Aorta (tissue), 5 donors: ENCODE measurements at regions of chr13 and their contacts with region 1.

Region 1: DNA sequence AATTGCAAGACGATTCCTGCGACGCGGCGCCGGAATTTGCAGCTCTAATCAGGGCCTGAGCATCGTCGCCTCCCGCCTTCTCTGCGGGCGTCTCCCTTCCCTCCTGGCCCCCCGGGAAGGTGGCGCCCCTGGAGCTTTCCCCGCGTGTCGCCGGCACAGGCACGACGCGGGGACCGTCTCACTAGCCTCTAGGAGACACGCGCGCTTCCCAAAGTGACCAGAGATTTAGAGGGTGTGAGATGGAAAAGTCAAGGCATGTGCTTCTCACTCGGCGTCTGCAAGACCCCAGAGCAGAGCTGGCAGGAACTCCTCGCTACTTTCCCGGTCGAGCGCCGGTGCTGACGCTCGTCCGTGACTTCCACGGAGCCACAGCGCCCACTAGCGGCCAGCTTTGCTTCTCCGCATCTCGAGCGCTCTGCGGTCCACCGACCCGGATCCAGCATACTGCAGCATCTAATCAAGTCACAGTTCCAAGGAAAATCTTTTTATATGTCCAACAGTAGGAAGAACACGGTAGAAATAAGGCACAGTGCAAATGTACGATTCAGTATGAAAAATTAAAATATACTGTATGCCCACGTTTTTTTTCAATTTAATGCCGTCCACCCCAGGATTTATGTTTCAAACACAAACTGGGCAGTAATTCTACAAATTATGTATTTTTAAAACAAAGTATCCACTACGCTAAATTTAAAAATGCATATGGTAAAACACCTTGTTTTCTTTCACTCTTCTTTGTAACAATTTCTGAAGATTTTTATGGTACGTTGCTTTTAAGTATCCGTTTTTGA is 977 bp upstream of the EFNB2 start:
- DNase-seq: peak; percentile 92 to 99
- ATAC-seq: peak; percentile 87
- H3K4me3 ChIP-seq: peak overlapping the region; percentile 43 to 99
- H3K27ac ChIP-seq: peak overlapping the region in 1 of 2 donors; percentile 7
- H3K4me1 ChIP-seq: no peaks in the 10 kb centered on the region
- H3K27me3 ChIP-seq: no peaks in the 10 kb centered on the region

Region 2: DNA sequence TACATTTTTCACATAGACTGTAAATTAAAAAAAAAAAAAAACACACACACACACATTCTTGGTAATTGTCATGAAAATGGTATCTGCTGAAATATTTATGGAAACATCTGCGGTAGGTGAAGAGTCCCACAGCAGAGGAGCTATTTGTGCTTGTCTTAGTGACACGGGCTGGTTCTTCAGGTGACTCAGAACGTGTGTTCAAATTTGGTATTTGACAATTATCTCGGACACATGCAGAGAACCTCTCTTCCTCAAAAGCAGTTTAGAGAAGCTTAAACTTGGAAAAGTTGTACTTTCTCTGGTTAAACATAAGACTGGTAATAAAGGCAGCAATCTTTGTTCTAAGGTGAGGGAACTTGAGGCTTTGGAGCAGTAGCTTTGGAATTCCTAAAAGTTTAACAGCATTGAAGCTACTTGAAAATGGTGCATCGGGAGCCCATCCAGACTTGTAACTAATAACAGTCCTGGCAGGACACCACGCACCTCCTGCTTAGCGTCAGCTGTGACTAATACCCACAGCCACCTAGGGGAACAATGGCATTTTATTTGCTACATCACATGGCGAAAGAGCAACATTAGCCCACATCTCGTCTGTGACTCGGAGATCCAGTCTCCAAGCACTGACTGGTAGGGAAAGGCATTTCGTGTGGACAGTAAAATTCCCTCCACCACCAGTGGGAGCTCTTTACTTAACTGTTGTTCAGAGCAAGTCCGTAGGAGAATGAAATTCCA is 1965.1 kb before region 1 on chr13:
- intact Hi-C with region 1: loop called (anchors 5 to 10 kb)
- DNase-seq: peak; percentile 58 to 74
- ATAC-seq: peak; percentile 84
- H3K4me3 ChIP-seq: peak overlapping the region in 1 of 2 donors; percentile 6
- H3K27ac ChIP-seq: no peak overlapping the region
- H3K4me1 ChIP-seq: peaks cover 0 to 2% of the 10 kb centered on the region in 2 donors
- H3K27me3 ChIP-seq: no peaks in the 10 kb centered on the region

Region 3: DNA sequence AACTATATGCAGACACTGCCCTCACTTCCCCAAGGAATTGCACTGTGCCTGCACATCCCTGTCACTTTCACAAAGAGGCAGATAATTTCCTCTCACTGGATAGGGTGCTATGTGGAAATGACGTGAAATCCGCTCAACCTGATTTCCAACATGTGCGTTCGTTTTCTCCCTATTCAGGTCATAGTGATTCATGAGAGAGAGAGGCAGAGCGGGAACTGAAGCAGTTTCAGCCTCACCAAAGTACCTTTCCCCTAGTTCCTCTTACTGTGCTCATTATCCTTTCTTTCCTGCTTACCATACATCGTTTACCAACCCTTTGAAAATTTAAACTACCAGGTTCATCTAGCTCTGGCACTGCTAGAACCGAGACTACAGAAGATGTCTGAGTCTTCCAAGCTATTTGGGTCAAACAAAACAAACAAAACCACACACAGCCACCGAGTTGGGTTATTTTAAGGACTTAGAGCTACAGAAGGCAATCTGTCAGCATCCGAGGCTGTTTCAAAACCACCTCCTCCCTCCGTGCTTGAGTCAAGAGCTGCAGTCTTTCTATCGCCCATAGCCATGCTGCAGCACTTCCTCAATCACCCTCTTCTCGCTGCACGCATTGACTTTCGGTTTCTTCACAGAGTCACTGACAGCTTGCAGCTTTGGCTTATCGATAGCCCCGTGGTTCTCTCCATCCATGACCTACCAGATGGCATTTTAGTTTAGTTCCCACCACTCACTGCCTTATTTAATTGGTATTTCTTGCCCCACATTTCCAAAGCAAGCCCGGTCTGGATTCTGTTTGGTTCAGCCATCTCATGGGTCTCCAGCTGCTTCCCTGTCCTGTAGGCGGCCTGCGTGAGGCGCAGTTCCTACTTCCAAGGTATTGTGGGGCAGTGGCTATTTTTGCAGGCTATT is 1396.8 kb before region 1 on chr13:
- intact Hi-C with region 1: loop called in 1 of 2 experiments (anchors 5 kb)
- DNase-seq: peak; percentile 73 to 81
- ATAC-seq: peak; percentile 77
- H3K4me3 ChIP-seq: peak overlapping the region; percentile 77 to 91
- H3K27ac ChIP-seq: peak overlapping the region in 1 of 2 donors; percentile 26
- H3K4me1 ChIP-seq: peaks cover 0 to 2% of the 10 kb centered on the region in 2 donors
- H3K27me3 ChIP-seq: no peaks in the 10 kb centered on the region

Region 4: GRCh38 chr13:105787632-105788031 is 748.8 kb before region 1 on chr13:
- intact Hi-C with region 1: loop called in 1 of 2 experiments (anchors 10 kb)
- DNase-seq: no peak
- ATAC-seq: no peak
- H3K4me3 ChIP-seq: peak overlapping the region in 1 of 2 donors; percentile 48
- H3K27ac ChIP-seq: no peak overlapping the region
- H3K4me1 ChIP-seq: peaks cover 0 to 4% of the 10 kb centered on the region in 2 donors
- H3K27me3 ChIP-seq: no peaks in the 10 kb centered on the region

Region 5: DNA sequence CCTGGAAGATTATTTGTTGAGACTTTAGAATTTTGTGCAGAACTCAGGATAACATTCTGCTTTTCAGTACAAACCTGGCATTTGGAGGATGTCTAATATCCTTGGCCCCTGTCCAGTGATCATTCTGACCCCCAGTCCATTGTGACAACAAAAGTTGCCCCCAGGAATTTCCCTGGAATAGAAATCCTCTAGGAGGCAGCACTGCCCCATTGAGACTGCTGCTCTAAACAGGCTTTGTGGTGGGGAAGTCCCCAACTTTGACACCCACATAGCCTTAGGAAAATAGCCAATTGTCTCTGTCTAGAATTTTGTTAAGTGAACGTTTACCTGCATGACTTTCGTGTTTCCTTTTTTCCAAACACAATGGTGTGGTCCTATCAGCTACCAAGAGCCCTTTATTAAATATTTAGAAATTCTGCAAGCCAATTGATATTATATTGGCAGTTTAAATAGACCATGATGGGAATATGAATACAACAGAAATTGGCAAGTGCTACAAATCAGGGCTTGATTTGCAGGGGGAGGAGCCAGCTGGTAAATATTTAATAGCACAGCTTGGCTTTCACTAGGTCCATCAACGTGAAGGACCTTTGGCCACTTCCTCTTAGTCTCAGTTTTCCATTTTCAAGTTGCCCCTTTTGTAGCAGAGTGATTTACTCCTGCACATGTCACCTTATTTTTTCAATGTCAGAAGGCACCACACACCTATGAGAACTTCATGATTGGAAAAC is 452.7 kb before region 1 on chr13:
- intact Hi-C with region 1: loop called (anchors 5 to 10 kb)
- DNase-seq: no peak
- ATAC-seq: peak; percentile 52
- H3K4me3 ChIP-seq: no peak overlapping the region
- H3K27ac ChIP-seq: no peak overlapping the region
- H3K4me1 ChIP-seq: no peaks in the 10 kb centered on the region
- H3K27me3 ChIP-seq: no peaks in the 10 kb centered on the region

Region 6: DNA sequence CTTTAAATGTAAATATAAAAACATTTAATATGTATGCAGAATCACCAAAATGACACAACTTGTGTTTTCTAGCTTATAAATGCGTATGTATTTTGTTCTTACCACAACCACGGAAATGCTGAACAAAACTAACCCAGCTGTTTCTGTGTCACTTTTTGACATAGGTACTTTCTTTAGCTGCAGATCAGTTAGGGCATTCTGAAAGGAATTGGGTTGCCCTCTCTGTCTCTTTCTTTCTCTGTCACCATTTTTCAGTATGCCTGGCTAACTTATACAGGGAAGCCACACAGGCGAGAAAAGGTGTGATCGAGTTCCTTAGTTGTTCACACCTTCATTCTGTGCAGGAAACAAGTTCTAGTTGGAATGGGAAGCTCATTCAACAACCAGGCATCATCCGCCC is 104.1 kb after region 1 on chr13:
- intact Hi-C with region 1: no loop called
- DNase-seq: no peak
- ATAC-seq: no peak
- H3K4me3 ChIP-seq: no peak overlapping the region
- H3K27ac ChIP-seq: no peak overlapping the region
- H3K4me1 ChIP-seq: no peaks in the 10 kb centered on the region
- H3K27me3 ChIP-seq: no peaks in the 10 kb centered on the region

Region 7: GRCh38 chr13:106917673-106918556 is 381.5 kb after region 1 on chr13:
- intact Hi-C with region 1: loop called (anchors 5 to 10 kb)
- DNase-seq: peak; percentile 80 to 94
- ATAC-seq: peak; percentile 97
- H3K4me3 ChIP-seq: peak overlapping the region; percentile 13 to 48
- H3K27ac ChIP-seq: peak overlapping the region; percentile 67 to 70
- H3K4me1 ChIP-seq: no peaks in the 10 kb centered on the region
- H3K27me3 ChIP-seq: no peaks in the 10 kb centered on the region